Caco-2 (cell line): ENCODE measurements at regions of chr18 and their contacts with region 1.

Region 1: GRCh38 chr18:9722691-9723090 is 14.6 kb downstream of the RAB31 start:
- DNase-seq: peak; percentile 74 to 78
- H3K4me3 ChIP-seq: no peak overlapping the region
- H3K4me3 Mint-ChIP-seq: no peak overlapping the region
- H3K27ac Mint-ChIP-seq: no peak overlapping the region
- H3K4me1 ChIP-seq: no peaks in the 10 kb centered on the region
- H3K4me1 Mint-ChIP-seq: peaks cover 11% of the 10 kb centered on the region
- H3K27me3 ChIP-seq: no peaks in the 10 kb centered on the region
- H3K27me3 Mint-ChIP-seq: no peaks in the 10 kb centered on the region
- CTCF ChIP-seq: peak; percentile 69 to 81

Region 2: GRCh38 chr18:9594823-9595596 is 127.7 kb before region 1 on chr18:
- CTCF ChIA-PET with region 1: no interaction called
- POLR2A ChIA-PET with region 1: no interaction called
- intact Hi-C with region 1: loop called (anchors 5 kb)
- DNase-seq: no peak
- H3K4me3 ChIP-seq: no peak overlapping the region
- H3K4me3 Mint-ChIP-seq: peak overlapping the region; percentile 1
- H3K27ac Mint-ChIP-seq: peak overlapping the region; percentile 26
- H3K4me1 ChIP-seq: peaks cover 25% of the 10 kb centered on the region
- H3K4me1 Mint-ChIP-seq: peaks cover 29% of the 10 kb centered on the region
- H3K27me3 ChIP-seq: no peaks in the 10 kb centered on the region
- H3K27me3 Mint-ChIP-seq: no peaks in the 10 kb centered on the region
- CTCF ChIP-seq: no peak

Region 3: GRCh38 chr18:9613550-9614400 is 108.9 kb before region 1 on chr18:
- CTCF ChIA-PET with region 1: interaction called, 3 read pairs
- POLR2A ChIA-PET with region 1: no interaction called
- intact Hi-C with region 1: loop called (anchors 1 kb)
- DNase-seq: peak; percentile 70 to 84
- H3K4me3 ChIP-seq: peak overlapping the region; percentile 79
- H3K4me3 Mint-ChIP-seq: peak overlapping the region; percentile 99
- H3K27ac Mint-ChIP-seq: peak overlapping the region; percentile 94
- H3K4me1 ChIP-seq: peaks cover 35% of the 10 kb centered on the region
- H3K4me1 Mint-ChIP-seq: peaks cover 30% of the 10 kb centered on the region
- H3K27me3 ChIP-seq: no peaks in the 10 kb centered on the region
- H3K27me3 Mint-ChIP-seq: no peaks in the 10 kb centered on the region
- CTCF ChIP-seq: no peak

Region 4: DNA sequence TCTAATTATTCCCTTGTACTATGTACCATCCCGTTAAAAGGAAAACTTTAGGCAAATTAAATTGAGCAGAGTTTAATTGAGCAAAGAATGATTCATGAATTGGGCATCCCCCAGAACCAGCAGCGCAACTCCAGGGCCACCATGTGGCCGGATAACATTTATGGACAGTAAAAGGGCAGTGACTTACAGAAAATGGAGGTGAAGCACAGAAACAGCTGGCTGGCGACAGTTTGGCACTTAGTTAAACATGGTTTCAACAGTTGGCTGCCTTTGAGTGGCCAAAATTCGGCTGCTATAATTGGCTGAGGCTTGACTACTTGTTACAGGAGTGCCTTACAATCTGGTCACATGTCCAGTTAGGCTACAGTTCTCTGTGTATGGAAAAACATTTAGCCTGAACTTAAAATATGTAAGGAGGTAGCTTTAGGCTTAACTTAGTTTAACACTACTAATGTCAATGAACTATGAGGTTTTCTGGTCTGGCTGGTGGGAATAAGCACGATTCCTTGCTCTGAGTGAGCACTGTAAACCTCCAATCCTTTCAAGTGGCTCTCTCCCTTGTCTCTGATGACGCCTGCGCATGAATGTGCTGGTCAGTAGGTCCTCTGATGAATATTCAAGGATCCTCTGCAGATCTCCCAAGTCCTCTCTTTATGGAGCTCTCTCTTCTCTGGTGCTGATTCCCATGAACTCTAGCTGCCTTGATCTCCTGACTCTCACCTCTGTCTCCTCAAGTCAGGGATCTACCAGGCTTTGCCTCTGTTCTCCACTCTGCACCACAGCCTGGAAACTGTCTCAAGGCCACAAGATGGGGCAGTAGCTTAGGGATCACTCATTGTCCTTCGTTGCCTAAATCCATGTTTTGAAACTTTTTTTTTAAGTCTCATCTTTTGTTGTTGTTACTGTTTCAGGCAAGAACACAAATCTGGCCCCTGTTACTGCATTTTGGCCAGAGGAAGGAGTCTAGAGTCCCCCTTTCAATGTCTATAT is 39.0 kb before region 1 on chr18:
- CTCF ChIA-PET with region 1: no interaction called
- POLR2A ChIA-PET with region 1: no interaction called
- intact Hi-C with region 1: loop called (anchors 1 kb)
- DNase-seq: peak; percentile 48 to 51
- H3K4me3 ChIP-seq: no peak overlapping the region
- H3K4me3 Mint-ChIP-seq: no peak overlapping the region
- H3K27ac Mint-ChIP-seq: peak overlapping the region; percentile 5
- H3K4me1 ChIP-seq: peaks cover 12% of the 10 kb centered on the region; the same call in 1 of the 2 replicates
- H3K4me1 Mint-ChIP-seq: peaks cover 11% of the 10 kb centered on the region
- H3K27me3 ChIP-seq: no peaks in the 10 kb centered on the region
- H3K27me3 Mint-ChIP-seq: no peaks in the 10 kb centered on the region
- CTCF ChIP-seq: peak in 1 of 2 experiments; percentile 49

Region 5: DNA sequence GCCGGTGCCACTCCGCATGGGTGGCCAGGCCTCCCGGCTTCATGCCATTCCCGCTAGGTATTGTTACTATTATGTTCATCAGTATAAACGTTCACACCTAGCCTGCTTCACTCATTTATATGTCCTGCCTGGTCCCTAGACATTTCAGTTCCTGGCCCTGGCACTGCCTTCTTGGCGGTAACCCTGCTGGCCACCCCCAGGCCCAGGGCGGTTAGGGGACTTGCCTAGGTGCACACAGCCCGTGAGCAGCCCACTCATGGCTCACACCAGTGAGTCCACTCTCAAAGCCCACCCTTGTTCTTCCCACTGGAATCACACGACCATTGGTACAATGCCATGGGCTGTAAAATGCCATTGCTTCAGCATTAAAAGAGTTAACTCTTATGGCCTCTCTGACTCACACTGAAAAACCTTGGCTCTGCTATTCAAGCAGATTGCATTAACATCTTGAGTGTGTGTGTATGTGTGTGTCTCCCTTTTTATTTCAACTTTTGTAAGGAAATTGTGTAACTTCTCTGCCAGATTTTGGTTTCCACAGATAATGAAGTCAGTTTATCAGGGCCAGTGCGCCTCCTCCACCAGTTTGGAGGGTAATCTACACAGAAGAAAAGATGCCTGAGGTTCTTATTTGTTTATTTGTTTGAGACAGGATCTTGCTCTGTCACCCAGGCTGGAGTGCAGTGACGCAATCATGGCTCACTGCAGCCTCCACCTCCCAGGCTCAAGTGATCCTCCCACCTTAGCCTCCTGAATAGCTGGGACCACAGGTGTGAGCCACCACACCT is 59.6 kb after region 1 on chr18:
- CTCF ChIA-PET with region 1: no interaction called
- POLR2A ChIA-PET with region 1: no interaction called
- intact Hi-C with region 1: no loop called
- DNase-seq: peak in 1 of 2 experiments; percentile 22
- H3K4me3 ChIP-seq: no peak overlapping the region
- H3K4me3 Mint-ChIP-seq: no peak overlapping the region
- H3K27ac Mint-ChIP-seq: no peak overlapping the region
- H3K4me1 ChIP-seq: peaks cover 8% of the 10 kb centered on the region
- H3K4me1 Mint-ChIP-seq: no peaks in the 10 kb centered on the region
- H3K27me3 ChIP-seq: no peaks in the 10 kb centered on the region
- H3K27me3 Mint-ChIP-seq: no peaks in the 10 kb centered on the region
- CTCF ChIP-seq: no peak